Motor neuron (in vitro differentiated cells): ENCODE measurements at regions of chr6 and their contacts with region 1.

Region 1: GRCh38 chr6:12011276-12012076 is 636 bp upstream of the HIVEP1 start:
- ATAC-seq: peak; percentile 58 to 76 (median 70)
- H3K4me3 ChIP-seq: peak overlapping the region; percentile 62 to 94 (median 83)
- H3K27ac ChIP-seq: peak overlapping the region; percentile 90 to 95
- H3K4me1 ChIP-seq: peaks cover 7 to 19% of the 10 kb centered on the region in 2 donors

Region 2: GRCh38 chr6:11700118-11700718 is 311.3 kb before region 1 on chr6:
- in situ Hi-C with region 1: loop called in 1 of 9 experiments (anchors 25 kb)
- ATAC-seq: no peak
- H3K4me3 ChIP-seq: no peak overlapping the region
- H3K27ac ChIP-seq: no peak overlapping the region
- H3K4me1 ChIP-seq: no peaks in the 10 kb centered on the region

Region 3: GRCh38 chr6:12233693-12234571 is 222.5 kb after region 1 on chr6:
- in situ Hi-C with region 1: loop called in 1 of 9 experiments (anchors 25 kb)
- ATAC-seq: peak; percentile 59 to 92 (median 78)
- H3K4me3 ChIP-seq: no peak overlapping the region
- H3K27ac ChIP-seq: no peak overlapping the region
- H3K4me1 ChIP-seq: no peaks in the 10 kb centered on the region